CD4-positive, alpha-beta memory T cell (primary cell): ENCODE measurements at regions of chr17 and their contacts with region 1.

Region 1: GRCh38 chr17:55421179-55421934 is at the start of gene MMD:
- DNase-seq: peak in 4 of 5 donors; percentile 2 to 40 (median 16)
- H3K4me3 ChIP-seq: peak within 1 kb of the TSS; percentile 80 to 81
- H3K4me3 Mint-ChIP-seq: peak within 1 kb of the TSS; percentile 87 to 96 (median 93)
- H3K27ac ChIP-seq: peak within 1 kb of the TSS; percentile 77
- H3K27ac Mint-ChIP-seq: peak within 1 kb of the TSS; percentile 81 to 97 (median 94)
- H3K4me1 ChIP-seq: peaks cover 20% of the 10 kb centered on the region
- H3K4me1 Mint-ChIP-seq: peaks cover 33 to 49% (median 36%) of the 10 kb centered on the region in 4 donors
- H3K27me3 ChIP-seq: peaks cover 12% of the 10 kb centered on the region
- H3K27me3 Mint-ChIP-seq: peaks cover 18 to 19% of the 10 kb centered on the region in 2 donors
- total RNA-seq, gene MMD: 4.2 to 9.2 TPM

Region 2: GRCh38 chr17:54968262-54968987 is 452.9 kb before region 1 on chr17 and contains the starts of genes COX11 and STXBP4:
- CTCF ChIA-PET with region 1: no interaction called
- POLR2A ChIA-PET with region 1: no interaction called
- intact Hi-C with region 1: loop called (anchors 1 kb)
- DNase-seq: peak; percentile 94 to 96 (median 95)
- H3K4me3 ChIP-seq: peak within 1 kb of the TSS; percentile 78 to 84
- H3K4me3 Mint-ChIP-seq: no peak within 1 kb of the TSS
- H3K27ac ChIP-seq: peak within 1 kb of the TSS; percentile 90
- H3K27ac Mint-ChIP-seq: no peak within 1 kb of the TSS
- H3K4me1 ChIP-seq: peaks cover 29% of the 10 kb centered on the region
- H3K4me1 Mint-ChIP-seq: peaks cover 8 to 23% (median 18%) of the 10 kb centered on the region in 4 donors
- H3K27me3 ChIP-seq: no peaks in the 10 kb centered on the region
- H3K27me3 Mint-ChIP-seq: no peaks in the 10 kb centered on the region
- total RNA-seq, gene COX11: 84.0 to 86.0 TPM
- total RNA-seq, gene STXBP4: 11.1 to 12.8 TPM

Region 3: DNA sequence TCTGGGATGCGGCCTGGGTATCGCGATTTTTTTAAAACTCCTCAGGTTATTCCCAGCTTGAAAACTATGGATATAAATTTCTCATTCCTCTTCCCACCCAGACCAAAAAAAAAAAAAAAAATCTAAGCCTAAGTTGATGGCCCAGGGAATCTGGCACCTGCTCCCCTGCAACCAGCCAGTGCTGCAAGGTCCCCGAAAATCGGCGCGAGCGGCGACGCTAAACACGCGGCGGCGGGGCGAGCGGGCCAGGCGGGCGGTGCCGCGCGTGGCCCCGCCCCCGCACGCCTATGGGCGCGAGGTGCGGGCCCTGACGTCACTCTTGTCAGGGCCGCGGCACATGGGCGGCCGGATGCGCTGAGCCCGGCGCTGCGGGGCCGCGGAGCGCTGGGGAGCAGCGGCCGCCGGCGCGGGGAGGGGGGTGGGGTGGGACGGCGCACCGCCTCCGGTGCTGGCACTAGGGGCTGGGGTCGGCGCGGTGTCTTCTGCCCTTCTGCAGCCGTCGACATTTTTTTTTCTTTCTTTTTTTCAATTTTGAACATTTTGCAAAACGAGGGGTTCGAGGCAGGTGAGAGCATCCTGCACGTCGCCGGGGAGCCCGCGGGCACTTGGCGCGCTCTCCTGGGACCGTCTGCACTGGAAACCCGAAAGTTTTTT is 156.6 kb before region 1 on chr17 and contains the start of gene HLF:
- CTCF ChIA-PET with region 1: no interaction called
- POLR2A ChIA-PET with region 1: interaction called, 3 read pairs
- intact Hi-C with region 1: loop called (anchors 2 kb)
- DNase-seq: peak; percentile 71 to 85 (median 82)
- H3K4me3 ChIP-seq: peak within 1 kb of the TSS; percentile 45 to 58
- H3K4me3 Mint-ChIP-seq: peak within 1 kb of the TSS; percentile 85 to 95 (median 88)
- H3K27ac ChIP-seq: peak within 1 kb of the TSS; percentile 22
- H3K27ac Mint-ChIP-seq: peak within 1 kb of the TSS; percentile 53 to 90 (median 85)
- H3K4me1 ChIP-seq: peaks cover 23% of the 10 kb centered on the region
- H3K4me1 Mint-ChIP-seq: peaks cover 24 to 54% (median 28%) of the 10 kb centered on the region in 4 donors
- H3K27me3 ChIP-seq: peaks cover 4% of the 10 kb centered on the region
- H3K27me3 Mint-ChIP-seq: peaks cover 7 to 11% of the 10 kb centered on the region in 2 donors
- total RNA-seq, gene HLF: 3.5 to 3.9 TPM

Region 4: DNA sequence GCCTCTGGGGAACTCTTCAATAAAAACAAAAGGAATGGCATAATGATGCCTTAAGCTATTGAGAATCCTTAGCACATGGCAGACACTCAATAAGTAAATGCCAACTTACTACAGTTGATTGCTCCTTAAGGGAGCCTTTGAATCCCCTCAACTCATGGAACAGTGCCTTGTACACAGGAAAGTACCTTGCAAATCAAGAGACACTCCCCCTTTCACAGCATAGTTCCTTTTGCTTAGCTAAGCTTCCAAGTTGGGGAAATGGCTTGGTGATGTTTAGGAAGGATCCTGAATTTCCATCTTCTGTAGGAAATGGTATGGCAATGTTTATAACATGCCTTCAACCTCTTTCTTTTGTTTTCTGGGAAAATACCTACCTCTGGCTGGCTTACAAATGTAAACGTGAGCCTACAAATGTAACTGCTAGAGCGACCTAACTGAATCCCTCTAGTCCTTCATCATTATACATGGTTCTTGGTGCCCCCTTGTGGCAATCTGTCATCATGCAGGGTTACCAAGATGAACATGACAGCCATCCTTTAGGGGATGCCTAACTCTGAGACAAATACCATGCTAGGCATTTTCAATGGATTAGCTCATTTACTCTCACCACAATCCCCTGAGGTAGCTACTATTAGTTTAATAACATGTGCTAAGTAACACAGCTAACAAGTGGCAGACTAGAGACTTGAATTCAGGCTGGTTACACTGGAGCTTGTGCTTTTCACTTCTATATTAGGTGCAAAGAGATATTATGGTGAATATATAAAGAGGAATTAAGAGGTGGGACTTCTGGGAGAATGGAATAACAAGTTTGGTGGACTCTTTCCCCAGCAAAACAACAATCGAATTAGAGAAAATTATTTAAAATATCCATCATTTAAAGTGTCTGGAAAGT is 64.7 kb before region 1 on chr17:
- CTCF ChIA-PET with region 1: interaction called, 11 read pairs
- POLR2A ChIA-PET with region 1: no interaction called
- intact Hi-C with region 1: no loop called
- DNase-seq: peak; percentile 56 to 73 (median 61)
- H3K4me3 ChIP-seq: no peak overlapping the region
- H3K4me3 Mint-ChIP-seq: no peak overlapping the region
- H3K27ac ChIP-seq: no peak overlapping the region
- H3K27ac Mint-ChIP-seq: no peak overlapping the region
- H3K4me1 ChIP-seq: no peaks in the 10 kb centered on the region
- H3K4me1 Mint-ChIP-seq: peaks cover 0 to 4% (median 3%) of the 10 kb centered on the region in 4 donors
- H3K27me3 ChIP-seq: no peaks in the 10 kb centered on the region
- H3K27me3 Mint-ChIP-seq: peaks cover 0 to 7% of the 10 kb centered on the region in 2 donors

Region 5: GRCh38 chr17:55513885-55514591 is 92.7 kb after region 1 on chr17:
- CTCF ChIA-PET with region 1: interaction called, 3 read pairs
- POLR2A ChIA-PET with region 1: no interaction called
- intact Hi-C with region 1: loop called (anchors 2 kb)
- DNase-seq: peak; percentile 54 to 66 (median 58)
- H3K4me3 ChIP-seq: no peak overlapping the region
- H3K4me3 Mint-ChIP-seq: no peak overlapping the region
- H3K27ac ChIP-seq: no peak overlapping the region
- H3K27ac Mint-ChIP-seq: no peak overlapping the region
- H3K4me1 ChIP-seq: no peaks in the 10 kb centered on the region
- H3K4me1 Mint-ChIP-seq: peaks cover 0 to 3% (median 0%) of the 10 kb centered on the region in 4 donors
- H3K27me3 ChIP-seq: peaks cover 6% of the 10 kb centered on the region
- H3K27me3 Mint-ChIP-seq: peaks cover 2 to 4% of the 10 kb centered on the region in 2 donors

Region 6: GRCh38 chr17:55576996-55577586 is 155.7 kb after region 1 on chr17:
- CTCF ChIA-PET with region 1: no interaction called
- POLR2A ChIA-PET with region 1: interaction called, 8 read pairs
- intact Hi-C with region 1: loop called (anchors 10 kb)
- DNase-seq: peak; percentile 48 to 67 (median 54)
- H3K4me3 ChIP-seq: peak overlapping the region; percentile 55 to 57
- H3K4me3 Mint-ChIP-seq: no peak overlapping the region
- H3K27ac ChIP-seq: peak overlapping the region; percentile 47
- H3K27ac Mint-ChIP-seq: no peak overlapping the region
- H3K4me1 ChIP-seq: peaks cover 30% of the 10 kb centered on the region
- H3K4me1 Mint-ChIP-seq: peaks cover 8 to 14% (median 9%) of the 10 kb centered on the region in 4 donors
- H3K27me3 ChIP-seq: no peaks in the 10 kb centered on the region
- H3K27me3 Mint-ChIP-seq: no peaks in the 10 kb centered on the region

Region 7: DNA sequence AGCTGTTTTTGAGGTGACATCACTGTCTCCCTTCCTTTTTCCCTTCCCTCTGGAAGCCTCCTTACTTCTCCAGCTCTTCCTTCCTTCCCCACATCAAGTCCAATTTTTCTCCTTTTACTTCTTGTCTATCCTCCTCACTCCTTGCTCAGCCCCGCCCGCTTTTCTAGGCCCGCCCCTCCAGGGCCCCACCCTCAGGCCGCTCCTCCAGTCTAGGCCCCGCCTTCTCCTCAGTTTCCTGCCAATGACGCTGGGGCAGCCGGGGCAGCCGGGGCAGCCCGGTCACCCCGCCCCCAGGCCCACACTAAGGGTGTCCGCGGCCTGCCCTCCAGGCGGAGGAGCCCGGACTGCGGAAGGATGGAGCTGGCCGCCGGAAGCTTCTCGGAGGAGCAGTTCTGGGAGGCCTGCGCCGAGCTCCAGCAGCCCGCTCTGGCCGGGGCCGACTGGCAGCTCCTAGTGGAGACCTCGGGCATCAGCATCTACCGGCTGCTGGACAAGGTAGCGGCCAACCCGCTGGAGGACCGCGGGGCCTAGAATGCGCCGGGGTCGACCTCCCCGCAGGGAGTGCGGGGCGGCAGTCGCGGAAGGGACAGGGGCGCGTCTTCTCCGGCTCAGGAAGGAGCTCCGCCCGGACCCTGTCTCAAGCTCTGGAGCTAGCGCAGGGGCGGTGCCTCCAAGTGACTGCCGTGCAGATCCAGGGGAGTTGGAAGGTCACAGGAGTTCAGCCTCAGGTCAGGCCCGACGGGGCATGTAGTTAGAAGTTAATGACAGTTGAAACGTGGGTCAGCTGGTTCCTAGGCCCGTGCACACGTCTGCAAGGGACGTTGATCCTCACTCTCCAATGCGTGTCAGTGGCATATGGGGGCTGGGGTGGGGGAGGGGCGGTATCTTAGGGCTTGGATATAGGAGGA is 329.6 kb after region 1 on chr17 and contains the start of gene PCTP:
- CTCF ChIA-PET with region 1: no interaction called
- POLR2A ChIA-PET with region 1: no interaction called
- intact Hi-C with region 1: loop called (anchors 1 kb)
- DNase-seq: peak; percentile 74 to 79 (median 78)
- H3K4me3 ChIP-seq: peak within 1 kb of the TSS; percentile 37 to 58
- H3K4me3 Mint-ChIP-seq: peak within 1 kb of the TSS; percentile 80 to 93 (median 88)
- H3K27ac ChIP-seq: peak within 1 kb of the TSS; percentile 39
- H3K27ac Mint-ChIP-seq: peak within 1 kb of the TSS; percentile 8 to 79 (median 48)
- H3K4me1 ChIP-seq: peaks cover 13% of the 10 kb centered on the region
- H3K4me1 Mint-ChIP-seq: peaks cover 15 to 26% (median 17%) of the 10 kb centered on the region in 4 donors
- H3K27me3 ChIP-seq: peaks cover 4% of the 10 kb centered on the region
- H3K27me3 Mint-ChIP-seq: peaks cover 15 to 20% of the 10 kb centered on the region in 2 donors
- total RNA-seq, gene PCTP: 2.7 to 3.3 TPM